GM13976 (cell line): ENCODE measurements at regions of chr2 and their contacts with region 1.

Region 1: DNA sequence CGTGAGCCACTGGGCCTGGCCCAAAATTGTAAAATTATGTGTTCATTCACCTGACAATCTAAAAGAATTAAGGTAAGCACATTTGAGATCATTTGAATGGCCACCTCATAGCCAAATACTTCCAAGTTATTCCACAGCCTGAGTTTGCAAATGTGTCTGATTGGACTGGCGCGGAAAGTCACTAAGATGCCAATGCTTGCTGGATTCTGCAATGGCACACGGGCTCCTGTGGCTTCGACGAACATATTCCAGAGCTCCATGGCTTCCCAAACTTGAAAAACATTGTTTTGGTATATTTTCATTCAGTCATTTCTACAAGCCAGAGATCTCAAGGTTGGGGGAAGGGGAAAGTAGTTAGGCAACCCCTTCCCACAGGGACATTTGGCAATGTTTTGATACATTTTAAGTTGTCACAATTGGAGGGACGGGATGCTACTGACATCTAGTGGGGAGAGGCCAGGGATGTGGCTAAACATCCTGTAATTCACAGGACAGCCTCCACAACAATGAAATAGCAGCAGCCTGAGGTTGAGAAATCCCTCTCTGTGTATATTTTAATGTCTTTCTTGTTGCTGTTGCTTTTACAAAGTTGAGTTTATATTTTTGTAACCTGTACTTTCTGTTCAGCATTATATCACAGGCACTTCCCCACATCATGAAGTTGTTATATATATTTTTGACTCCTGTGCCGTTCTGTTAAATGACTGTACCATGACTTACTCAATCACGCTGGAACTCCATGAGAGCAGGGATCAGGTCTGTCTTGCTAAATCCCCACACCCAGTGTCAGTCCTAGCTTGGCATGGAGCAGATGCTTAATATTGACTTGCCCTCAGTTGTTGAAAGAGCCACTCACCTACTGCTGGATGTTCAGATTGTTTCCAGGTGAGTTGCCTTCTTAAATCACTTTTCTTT is 56.9 kb downstream of the COL4A4 start:
- DNase-seq: peak; percentile 35
- CTCF ChIP-seq: peak; percentile 42

Region 2: GRCh38 chr2:225889446-225889850 is 1217.7 kb before region 1 on chr2:
- in situ Hi-C with region 1: loop called (anchors 25 kb)
- DNase-seq: peak; percentile 16
- CTCF ChIP-seq: peak; percentile 36

Region 3: GRCh38 chr2:226800941-226801784 is 305.9 kb before region 1 on chr2:
- in situ Hi-C with region 1: loop called (anchors 25 kb)
- DNase-seq: peak; percentile 85
- CTCF ChIP-seq: no peak

Region 4: DNA sequence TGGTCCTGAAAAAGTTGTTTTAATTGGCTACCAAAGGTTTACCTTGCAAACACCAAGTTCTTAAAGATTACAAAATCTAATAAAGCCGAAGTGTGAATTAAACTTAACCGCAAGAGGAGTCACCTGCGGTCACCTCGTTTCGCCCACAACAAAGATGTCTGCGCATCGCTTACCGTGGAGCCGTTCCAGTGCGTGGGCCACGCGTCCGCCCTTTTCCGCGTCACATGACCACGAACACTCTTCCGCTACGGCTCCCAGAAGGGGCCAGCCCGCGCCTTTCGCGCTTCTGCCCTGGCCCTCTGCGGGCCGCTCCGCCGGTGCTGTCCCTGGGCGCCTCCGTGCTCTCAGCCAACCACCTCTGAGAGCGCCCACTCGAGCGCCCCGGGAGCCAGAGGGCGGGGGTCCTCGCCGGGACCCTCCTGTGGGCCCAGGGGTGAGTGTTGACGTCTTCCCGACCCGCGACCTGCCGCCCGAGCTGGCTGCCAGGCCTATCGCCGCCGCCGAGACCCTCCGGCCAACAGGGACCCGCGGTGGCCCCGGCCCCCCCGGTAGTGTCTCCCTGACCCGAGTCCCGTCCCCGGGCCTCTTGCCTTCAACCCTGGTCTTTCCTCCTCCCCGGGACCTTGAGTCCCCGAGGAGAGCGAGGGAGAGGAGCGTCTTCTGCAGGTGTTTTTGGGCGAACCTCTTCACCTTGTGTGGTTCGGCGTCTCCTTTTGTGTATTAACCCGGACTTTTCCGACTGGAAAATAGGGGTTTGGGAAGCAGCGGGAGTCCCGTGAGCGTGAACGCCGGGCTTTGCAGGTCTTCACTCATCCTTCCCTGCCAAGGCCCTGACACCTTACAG is 218.1 kb after region 1 on chr2 and contains the start of gene MFF:
- in situ Hi-C with region 1: no loop called
- DNase-seq: peak; percentile 95
- CTCF ChIP-seq: peak; percentile 50